ENCODE measurements at regions of chr11 and their contacts with region 1.

Region 1: GRCh38 chr11:75867775-75868374 is 52.9 kb downstream of the UVRAG start:
- DNase-seq: peak; percentile 50
- H3K27ac ChIP-seq: no peak overlapping the region
- CTCF ChIP-seq: peak; percentile 76

Region 2: GRCh38 chr11:75543806-75544205 is 324.1 kb before region 1 on chr11:
- CTCF ChIA-PET with region 1: no interaction called
- POLR2A ChIA-PET with region 1: no interaction called
- DNase-seq: no peak
- H3K27ac ChIP-seq: no peak overlapping the region
- CTCF ChIP-seq: no peak

Region 3: DNA sequence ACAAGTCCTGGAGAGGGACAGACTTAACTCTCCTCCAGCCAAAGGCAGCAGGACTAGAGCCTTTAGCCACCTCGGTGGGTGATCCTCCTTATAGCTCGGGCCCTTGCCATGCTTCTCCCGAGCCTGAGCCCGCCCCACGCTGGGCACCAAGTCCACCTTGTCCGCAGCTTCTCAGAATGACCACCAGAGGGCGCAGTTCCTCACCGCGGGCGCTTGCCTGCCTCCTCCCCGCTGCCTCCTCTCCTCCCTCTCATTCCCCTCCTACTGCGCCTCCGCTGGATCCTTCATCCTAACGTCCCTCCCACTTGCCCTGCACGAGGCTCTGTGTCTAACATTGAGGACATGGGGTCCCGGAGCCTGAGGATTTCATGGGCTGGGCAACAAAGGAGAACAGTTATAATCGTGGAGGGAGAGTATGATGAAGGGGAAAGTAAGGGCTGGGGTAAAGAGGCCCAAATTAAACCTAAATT is 161.6 kb before region 1 on chr11:
- CTCF ChIA-PET with region 1: interaction called, 13 read pairs
- POLR2A ChIA-PET with region 1: no interaction called
- DNase-seq: peak; percentile 81
- H3K27ac ChIP-seq: no peak overlapping the region
- CTCF ChIP-seq: peak; percentile 91

Region 4: GRCh38 chr11:75802913-75803820 is 64.7 kb before region 1 on chr11:
- CTCF ChIA-PET with region 1: interaction called, 10 read pairs
- POLR2A ChIA-PET with region 1: no interaction called
- DNase-seq: peak; percentile 70
- H3K27ac ChIP-seq: no peak overlapping the region
- CTCF ChIP-seq: peak; percentile 82